Activated B cell treated with CpG ODN at 0.5 μM for 24 hours (primary cell): ENCODE measurements at regions of chr14 and their contacts with region 1.

Region 1: GRCh38 chr14:72926292-72927028 is at the start of gene DCAF4:
- DNase-seq: peak; percentile 86
- ATAC-seq: peak; percentile 94
- H3K4me3 Mint-ChIP-seq: peak within 1 kb of the TSS; percentile 98
- H3K27ac Mint-ChIP-seq: peak within 1 kb of the TSS; percentile 98
- H3K4me1 Mint-ChIP-seq: peaks cover 19% of the 10 kb centered on the region
- H3K27me3 Mint-ChIP-seq: no peaks in the 10 kb centered on the region
- CTCF ChIP-seq: no peak
- total RNA-seq, gene DCAF4: 33.9 and 38.7 TPM in 2 replicates

Region 2: GRCh38 chr14:72893636-72894321 is 32.7 kb before region 1 on chr14 and contains the start of gene DPF3:
- CTCF ChIA-PET with region 1: no interaction called
- POLR2A ChIA-PET with region 1: interaction called, 18 read pairs
- intact Hi-C with region 1: loop called (anchors 1 kb)
- DNase-seq: peak; percentile 91
- ATAC-seq: peak; percentile 98
- H3K4me3 Mint-ChIP-seq: peak within 1 kb of the TSS; percentile 98
- H3K27ac Mint-ChIP-seq: peak within 1 kb of the TSS; percentile 83
- H3K4me1 Mint-ChIP-seq: peaks cover 35% of the 10 kb centered on the region
- H3K27me3 Mint-ChIP-seq: peaks cover 3% of the 10 kb centered on the region
- CTCF ChIP-seq: no peak
- total RNA-seq, gene DPF3: 3.5 and 4.3 TPM in 2 replicates

Region 3: DNA sequence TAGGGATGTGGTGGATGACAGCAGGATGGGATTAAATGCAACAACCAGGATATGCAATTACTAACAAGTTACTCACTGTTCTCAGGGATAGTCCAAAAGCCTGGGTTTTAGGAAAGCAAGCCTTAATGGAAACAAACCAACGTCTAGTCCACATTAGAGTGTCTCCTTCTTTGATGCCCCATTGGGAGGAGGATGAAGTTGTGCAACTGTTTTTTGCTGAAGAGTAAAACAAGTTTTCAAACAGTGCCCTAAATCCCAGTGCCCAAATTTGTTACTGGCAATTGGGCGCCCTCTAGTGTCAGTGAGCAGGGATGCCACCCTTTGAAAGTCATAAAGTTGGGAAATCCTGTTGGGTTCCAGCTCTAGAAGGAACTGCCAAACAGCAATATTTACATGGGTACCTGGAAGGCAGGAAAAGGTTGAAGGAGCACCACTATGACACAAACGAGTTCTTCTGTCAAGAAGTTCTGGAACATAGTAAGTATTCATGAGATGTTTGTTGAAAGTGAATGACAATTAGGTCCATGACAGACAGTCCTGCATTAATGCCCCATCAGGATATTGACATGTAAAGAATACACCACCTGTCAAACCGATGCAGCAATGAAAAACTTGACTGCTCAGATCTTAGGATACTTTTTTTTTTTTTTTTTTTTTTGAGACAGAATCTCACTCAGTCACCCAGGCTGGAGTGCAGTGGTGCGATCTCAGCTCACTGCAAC is 21.5 kb before region 1 on chr14:
- CTCF ChIA-PET with region 1: interaction called, 3 read pairs
- POLR2A ChIA-PET with region 1: no interaction called
- intact Hi-C with region 1: loop called (anchors 1 kb)
- DNase-seq: no peak
- ATAC-seq: peak; percentile 79
- H3K4me3 Mint-ChIP-seq: no peak overlapping the region
- H3K27ac Mint-ChIP-seq: no peak overlapping the region
- H3K4me1 Mint-ChIP-seq: peaks cover 17% of the 10 kb centered on the region
- H3K27me3 Mint-ChIP-seq: no peaks in the 10 kb centered on the region
- CTCF ChIP-seq: no peak

Region 4: GRCh38 chr14:72948481-72949138 is 22.1 kb after region 1 on chr14:
- CTCF ChIA-PET with region 1: interaction called, 6 read pairs
- POLR2A ChIA-PET with region 1: interaction called, 4 read pairs
- intact Hi-C with region 1: loop called (anchors 1 kb)
- DNase-seq: peak; percentile 48
- ATAC-seq: peak; percentile 60
- H3K4me3 Mint-ChIP-seq: no peak overlapping the region
- H3K27ac Mint-ChIP-seq: no peak overlapping the region
- H3K4me1 Mint-ChIP-seq: no peaks in the 10 kb centered on the region
- H3K27me3 Mint-ChIP-seq: no peaks in the 10 kb centered on the region
- CTCF ChIP-seq: no peak

Region 5: DNA sequence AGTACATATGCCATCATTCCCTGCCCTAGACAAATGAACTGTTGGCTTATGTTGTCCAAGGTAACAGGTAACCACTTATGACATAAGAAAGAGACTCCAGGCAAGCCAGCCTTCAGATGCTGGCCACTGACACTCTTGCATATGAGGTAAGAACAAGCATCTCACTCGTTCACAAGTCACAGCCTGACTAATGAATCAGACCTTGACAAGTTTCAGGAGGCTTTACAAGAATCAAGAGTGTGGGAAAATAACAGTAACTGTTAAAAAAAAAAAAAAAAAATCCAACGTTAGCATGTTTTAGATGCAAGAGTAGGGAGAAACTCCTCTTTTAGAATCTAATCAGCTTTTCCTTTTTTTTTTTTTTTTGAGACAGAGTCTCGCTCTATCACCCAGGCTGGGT is 59.8 kb after region 1 on chr14:
- CTCF ChIA-PET with region 1: no interaction called
- POLR2A ChIA-PET with region 1: no interaction called
- intact Hi-C with region 1: no loop called
- DNase-seq: no peak
- ATAC-seq: no peak
- H3K4me3 Mint-ChIP-seq: no peak overlapping the region
- H3K27ac Mint-ChIP-seq: no peak overlapping the region
- H3K4me1 Mint-ChIP-seq: no peaks in the 10 kb centered on the region
- H3K27me3 Mint-ChIP-seq: no peaks in the 10 kb centered on the region
- CTCF ChIP-seq: no peak

Region 6: DNA sequence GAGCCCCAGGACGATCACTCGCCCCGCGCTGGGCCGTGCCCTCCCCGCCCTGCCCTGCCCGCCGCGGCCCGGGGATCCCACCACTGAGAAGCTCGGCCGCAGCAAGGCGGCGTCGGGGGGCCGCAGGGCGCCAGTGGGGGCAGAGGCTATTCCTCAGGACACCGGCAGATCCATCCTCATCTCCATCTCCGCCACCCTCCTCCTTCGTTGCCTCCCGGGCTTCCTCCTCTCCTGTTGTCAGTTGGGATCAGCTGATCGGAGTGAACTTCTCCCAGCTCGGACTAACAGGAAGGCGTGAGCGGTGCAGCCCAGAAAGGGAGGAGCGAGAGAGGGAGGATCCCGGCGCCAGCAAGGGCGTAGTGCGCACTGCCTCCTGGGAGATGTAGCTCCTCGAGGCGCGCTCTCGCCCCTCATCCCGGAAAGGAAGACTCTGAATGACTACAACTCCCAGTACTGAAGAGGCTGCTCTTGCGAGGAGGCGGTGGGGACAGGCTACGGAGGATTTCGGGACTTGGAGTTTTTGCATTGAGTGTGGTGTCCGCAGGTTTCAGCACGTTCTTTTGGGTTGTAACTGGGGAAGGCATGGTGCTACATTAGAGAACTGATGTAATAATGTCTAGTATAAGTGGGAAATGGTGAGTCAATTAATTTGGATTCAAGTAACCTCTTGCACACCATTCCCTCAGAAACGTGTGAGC is 100.5 kb after region 1 on chr14 and contains the start of gene ZFYVE1:
- CTCF ChIA-PET with region 1: no interaction called
- POLR2A ChIA-PET with region 1: interaction called, 4 read pairs
- intact Hi-C with region 1: loop called (anchors 1 kb)
- DNase-seq: peak; percentile 76
- ATAC-seq: peak; percentile 99
- H3K4me3 Mint-ChIP-seq: peak within 1 kb of the TSS; percentile 98
- H3K27ac Mint-ChIP-seq: peak within 1 kb of the TSS; percentile 88
- H3K4me1 Mint-ChIP-seq: peaks cover 42% of the 10 kb centered on the region
- H3K27me3 Mint-ChIP-seq: no peaks in the 10 kb centered on the region
- CTCF ChIP-seq: no peak
- total RNA-seq, gene ZFYVE1: 12.7 and 16.5 TPM in 2 replicates

Region 7: GRCh38 chr14:73058224-73058921 is 131.9 kb after region 1 on chr14 and contains the start of gene RBM25:
- CTCF ChIA-PET with region 1: no interaction called
- POLR2A ChIA-PET with region 1: interaction called, 5 read pairs
- intact Hi-C with region 1: loop called (anchors 1 kb)
- DNase-seq: peak; percentile 90
- ATAC-seq: peak; percentile 93
- H3K4me3 Mint-ChIP-seq: no peak within 1 kb of the TSS
- H3K27ac Mint-ChIP-seq: no peak within 1 kb of the TSS
- H3K4me1 Mint-ChIP-seq: peaks cover 42% of the 10 kb centered on the region
- H3K27me3 Mint-ChIP-seq: no peaks in the 10 kb centered on the region
- CTCF ChIP-seq: no peak
- total RNA-seq, gene RBM25: 114 and 123 TPM in 2 replicates

Region 8: GRCh38 chr14:73136387-73137225 is 210.1 kb after region 1 on chr14 and contains the start of gene PSEN1:
- CTCF ChIA-PET with region 1: no interaction called
- POLR2A ChIA-PET with region 1: interaction called, 3 read pairs
- intact Hi-C with region 1: loop called (anchors 1 kb)
- DNase-seq: peak; percentile 99
- ATAC-seq: peak; percentile 92
- H3K4me3 Mint-ChIP-seq: peak within 1 kb of the TSS; percentile 95
- H3K27ac Mint-ChIP-seq: peak within 1 kb of the TSS; percentile 98
- H3K4me1 Mint-ChIP-seq: peaks cover 33% of the 10 kb centered on the region
- H3K27me3 Mint-ChIP-seq: no peaks in the 10 kb centered on the region
- CTCF ChIP-seq: no peak
- total RNA-seq, gene PSEN1: 38.6 and 42.9 TPM in 2 replicates